ENCODE measurements at regions of chr5 and their contacts with region 1.

Region 1: DNA sequence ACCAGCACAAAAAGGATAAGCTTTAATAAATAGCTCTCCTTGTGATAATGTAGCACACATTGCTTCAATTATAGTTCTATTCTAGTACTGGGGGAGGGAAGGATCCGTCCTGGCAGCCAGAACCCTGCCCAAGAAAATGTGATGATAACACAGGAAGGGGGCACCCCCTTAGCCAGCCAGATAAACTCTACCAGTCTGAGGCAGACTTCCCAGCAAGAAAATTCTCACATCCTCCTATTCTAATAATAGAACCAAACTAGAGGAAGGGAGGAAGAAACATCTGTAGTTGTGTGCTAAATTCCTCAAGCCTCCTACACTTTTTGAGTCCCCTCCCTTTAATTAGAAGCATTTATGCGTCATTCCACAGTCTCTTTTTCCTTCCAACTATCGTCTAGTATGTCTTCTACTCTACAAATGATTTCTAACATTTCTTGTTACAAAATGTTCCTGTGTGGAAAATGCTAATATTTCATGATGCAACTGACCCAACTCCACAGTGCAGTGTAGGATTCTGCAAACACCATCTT is 261.0 kb downstream of the SEMA5A start:
- DNase-seq: no peak
- ATAC-seq: peak; percentile 90

Region 2: GRCh38 chr5:9233712-9234111 is 51.1 kb before region 1 on chr5:
- intact Hi-C with region 1: loop called (anchors 2 kb)
- DNase-seq: no peak
- ATAC-seq: peak; percentile 44

Region 3: DNA sequence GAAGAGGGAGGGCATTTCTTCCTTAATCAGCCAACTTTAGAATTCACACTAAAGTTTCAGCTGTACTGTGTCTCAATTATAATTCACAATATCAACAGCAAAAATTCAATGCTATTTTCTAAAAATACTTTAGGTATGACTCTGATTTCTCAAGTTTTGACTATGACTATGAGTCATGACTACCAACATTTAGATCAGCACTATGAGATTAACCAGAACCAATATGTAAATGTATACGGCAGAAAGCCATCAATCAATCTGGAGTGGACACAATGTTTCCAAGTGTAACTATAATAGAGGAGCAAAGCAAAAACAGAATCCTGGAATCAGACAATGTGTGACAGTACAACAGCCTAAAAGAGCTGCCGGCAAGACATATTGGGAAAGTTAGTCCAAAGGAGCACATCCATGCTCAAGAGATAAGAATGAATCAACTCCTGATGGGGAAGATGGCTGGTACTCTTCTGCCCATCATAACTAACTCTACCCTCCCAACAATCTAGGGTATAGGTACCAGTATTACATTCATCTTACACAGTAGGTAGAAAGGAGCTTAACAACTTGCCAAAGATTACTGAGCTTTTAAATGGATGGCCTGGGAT is 33.4 kb before region 1 on chr5:
- intact Hi-C with region 1: no loop called
- DNase-seq: no peak
- ATAC-seq: no peak

Region 4: GRCh38 chr5:9265441-9266175 is 19.2 kb before region 1 on chr5:
- intact Hi-C with region 1: no loop called
- DNase-seq: no peak
- ATAC-seq: peak; percentile 84